Dorsolateral prefrontal cortex (tissue), 120 donors: ENCODE measurements at regions of chr6 and their contacts with region 1.

Region 1: GRCh38 chr6:137094411-137095008 is 49.7 kb upstream of the IL20RA start:
- DNase-seq: peak in 4 of 10 donors; percentile 21 to 60 (median 44)
- H3K4me3 ChIP-seq: peak overlapping the region in 6 of 59 donors; percentile 3 to 24 (median 12)
- H3K27ac ChIP-seq: peak overlapping the region in 22 of 59 donors; percentile 3 to 68 (median 51)
- H3K27me3 ChIP-seq: no peaks in the 10 kb centered on the region
- CTCF ChIP-seq: peak; percentile 54 to 90 (median 76)

Region 2: GRCh38 chr6:137202078-137202477 is 107.6 kb after region 1 on chr6:
- intact Hi-C with region 1: loop called (anchors 1 to 5 kb)
- DNase-seq: peak; percentile 31 to 81 (median 70)
- H3K4me3 ChIP-seq: peak overlapping the region in 2 of 59 donors; percentile 3 to 12
- H3K27ac ChIP-seq: peak overlapping the region in 19 of 59 donors; percentile 2 to 61 (median 38)
- H3K27me3 ChIP-seq: no peaks in the 10 kb centered on the region
- CTCF ChIP-seq: peak; percentile 21 to 83 (median 66)

Region 3: GRCh38 chr6:137218917-137219663 is 124.6 kb after region 1 on chr6 and contains the start of gene IFNGR1:
- intact Hi-C with region 1: loop called in 1 of 2 experiments (anchors 5 kb)
- DNase-seq: peak; percentile 93 to 99 (median 97)
- H3K4me3 ChIP-seq: peak within 1 kb of the TSS; percentile 58 to 99 (median 93)
- H3K27ac ChIP-seq: peak within 1 kb of the TSS; percentile 64 to 98 (median 95)
- H3K27me3 ChIP-seq: no peaks in the 10 kb centered on the region
- CTCF ChIP-seq: peak in 31 of 56 donors; percentile 7 to 56 (median 25)
- total RNA-seq, gene IFNGR1: 27.5 to 68.4 (median 46.0) TPM